IMR-90 (cell line): ENCODE measurements at regions of chr4 and their contacts with region 1.

Region 1: GRCh38 chr4:84966383-84967242 is at the start of gene WDFY3:
- DNase-seq: peak; percentile 89
- ATAC-seq: peak; percentile 95
- H3K4me3 ChIP-seq: peak within 1 kb of the TSS; percentile 73
- H3K27ac ChIP-seq: peak within 1 kb of the TSS; percentile 91
- H3K4me1 ChIP-seq: peaks cover 5% of the 10 kb centered on the region; the same call in 1 of the 2 replicates
- H3K27me3 ChIP-seq: no peaks in the 10 kb centered on the region
- CTCF ChIP-seq: 0 out of 2 replicates have a peak, but pooled peaks have one; percentile 10
- POLR2A ChIP-seq: peak; percentile 53; the same call in 1 of the 2 replicates
- RAD21 ChIP-seq: no peak
- total RNA-seq, gene WDFY3: 58.1 and 59.7 TPM in 2 replicates

Region 2: DNA sequence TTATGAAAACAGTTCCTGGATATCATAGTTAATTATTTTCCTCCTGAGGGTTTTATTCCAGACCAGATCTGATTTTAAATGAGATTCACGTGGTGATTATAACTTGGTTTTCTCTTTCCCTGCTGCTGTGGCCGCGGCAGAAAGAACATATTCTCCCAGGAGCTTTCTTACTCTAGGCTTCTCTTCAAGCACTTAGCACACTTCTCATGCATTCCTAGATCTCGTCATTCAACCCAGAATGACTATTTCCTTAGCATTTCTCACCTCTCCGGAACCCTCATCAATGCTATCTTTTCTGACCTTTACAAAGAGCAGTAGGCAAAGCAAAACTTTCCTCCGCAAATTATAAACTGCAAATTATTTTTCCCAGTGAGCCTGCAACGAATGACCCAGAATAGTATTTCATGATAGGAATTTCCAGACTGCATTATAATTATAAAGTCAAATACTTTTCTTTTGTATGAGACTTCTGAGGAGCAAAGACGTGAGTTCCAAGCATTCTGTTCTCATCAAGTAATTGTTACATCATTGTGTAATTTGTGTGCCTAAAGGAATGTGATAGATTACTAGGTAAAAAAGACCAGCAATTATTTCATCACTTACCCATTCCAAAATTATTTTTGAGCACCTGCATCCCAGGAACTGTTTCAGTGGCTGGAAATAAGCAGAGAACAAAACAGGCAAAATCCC is 1307.7 kb before region 1 on chr4:
- CTCF ChIA-PET with region 1: no interaction called
- POLR2A ChIA-PET with region 1: no interaction called
- dilution Hi-C with region 1: no loop called
- in situ Hi-C with region 1: no loop called
- intact Hi-C with region 1: no loop called
- DNase-seq: no peak
- ATAC-seq: no peak
- H3K4me3 ChIP-seq: no peak overlapping the region
- H3K27ac ChIP-seq: no peak overlapping the region
- H3K4me1 ChIP-seq: no peaks in the 10 kb centered on the region
- H3K27me3 ChIP-seq: peaks cover 4% of the 10 kb centered on the region
- CTCF ChIP-seq: no peak
- POLR2A ChIP-seq: no peak
- RAD21 ChIP-seq: no peak

Region 3: GRCh38 chr4:84582302-84583000 is 384.2 kb before region 1 on chr4:
- CTCF ChIA-PET with region 1: interaction called, 5 read pairs
- POLR2A ChIA-PET with region 1: no interaction called
- dilution Hi-C with region 1: no loop called
- in situ Hi-C with region 1: no loop called
- intact Hi-C with region 1: loop called (anchors 1 kb)
- DNase-seq: peak; percentile 22
- ATAC-seq: peak; percentile 80
- H3K4me3 ChIP-seq: peak overlapping the region; percentile 57
- H3K27ac ChIP-seq: no peak overlapping the region
- H3K4me1 ChIP-seq: no peaks in the 10 kb centered on the region
- H3K27me3 ChIP-seq: peaks cover 41% of the 10 kb centered on the region
- CTCF ChIP-seq: no peak
- POLR2A ChIP-seq: no peak
- RAD21 ChIP-seq: no peak

Region 4: GRCh38 chr4:84691170-84691691 is 275.4 kb before region 1 on chr4:
- CTCF ChIA-PET with region 1: no interaction called
- POLR2A ChIA-PET with region 1: no interaction called
- dilution Hi-C with region 1: no loop called
- in situ Hi-C with region 1: no loop called
- intact Hi-C with region 1: loop called (anchors 5 kb)
- DNase-seq: peak; percentile 94
- ATAC-seq: peak; percentile 88
- H3K4me3 ChIP-seq: no peak overlapping the region; the same call in 1 of the 2 replicates
- H3K27ac ChIP-seq: 0 out of 2 replicates have a peak overlapping the region, but pooled peaks have one; percentile 6
- H3K4me1 ChIP-seq: peaks cover 14% of the 10 kb centered on the region
- H3K27me3 ChIP-seq: no peaks in the 10 kb centered on the region
- CTCF ChIP-seq: no peak
- POLR2A ChIP-seq: no peak
- RAD21 ChIP-seq: no peak

Region 5: DNA sequence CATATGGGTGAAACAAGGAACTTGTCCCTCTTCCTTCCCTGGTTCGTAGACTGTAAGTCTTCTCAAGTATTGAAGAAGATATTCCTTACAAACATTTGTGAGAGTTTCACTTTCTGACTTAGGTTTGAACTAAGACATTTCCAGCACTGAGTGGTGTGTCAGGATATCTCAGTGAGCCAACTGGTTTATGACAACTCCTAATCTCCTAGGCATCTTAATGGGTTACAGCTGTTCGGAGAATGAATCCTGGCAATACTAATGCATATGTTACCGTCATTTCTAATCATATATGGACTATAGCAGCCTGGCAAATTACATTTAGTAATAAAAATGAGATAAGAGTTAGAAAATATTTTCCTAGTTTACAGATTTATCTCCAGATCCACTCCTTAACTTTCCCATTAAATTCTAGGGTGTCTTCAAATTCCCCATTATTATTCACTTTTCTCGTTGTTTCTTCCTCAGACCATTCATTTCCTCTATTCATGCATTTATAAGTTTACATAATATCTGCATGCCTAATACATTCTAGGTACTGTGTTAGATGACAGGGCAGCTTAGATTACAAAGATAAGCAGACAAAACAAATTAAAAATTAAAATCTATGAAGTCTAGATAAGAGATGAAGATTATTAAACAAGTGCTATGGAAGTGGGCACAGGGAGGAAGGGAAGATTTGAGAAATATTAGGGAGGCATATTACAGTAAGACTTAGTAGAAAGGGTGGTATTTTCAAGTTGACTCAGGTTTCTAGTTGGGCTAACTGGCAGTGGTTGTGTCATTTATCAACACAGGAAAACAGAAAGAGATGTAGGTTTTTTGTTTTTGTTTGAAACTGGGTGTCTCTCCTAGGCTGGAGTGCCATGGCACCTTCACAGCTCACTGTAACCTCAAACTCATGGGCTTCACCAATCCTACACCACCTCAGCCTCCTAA is 174.0 kb before region 1 on chr4:
- CTCF ChIA-PET with region 1: interaction called, 3 read pairs
- POLR2A ChIA-PET with region 1: no interaction called
- dilution Hi-C with region 1: no loop called
- in situ Hi-C with region 1: no loop called
- intact Hi-C with region 1: loop called (anchors 5 kb)
- DNase-seq: peak; percentile 45
- ATAC-seq: peak; percentile 64
- H3K4me3 ChIP-seq: no peak overlapping the region
- H3K27ac ChIP-seq: no peak overlapping the region
- H3K4me1 ChIP-seq: no peaks in the 10 kb centered on the region
- H3K27me3 ChIP-seq: no peaks in the 10 kb centered on the region
- CTCF ChIP-seq: no peak
- POLR2A ChIP-seq: no peak
- RAD21 ChIP-seq: no peak

Region 6: DNA sequence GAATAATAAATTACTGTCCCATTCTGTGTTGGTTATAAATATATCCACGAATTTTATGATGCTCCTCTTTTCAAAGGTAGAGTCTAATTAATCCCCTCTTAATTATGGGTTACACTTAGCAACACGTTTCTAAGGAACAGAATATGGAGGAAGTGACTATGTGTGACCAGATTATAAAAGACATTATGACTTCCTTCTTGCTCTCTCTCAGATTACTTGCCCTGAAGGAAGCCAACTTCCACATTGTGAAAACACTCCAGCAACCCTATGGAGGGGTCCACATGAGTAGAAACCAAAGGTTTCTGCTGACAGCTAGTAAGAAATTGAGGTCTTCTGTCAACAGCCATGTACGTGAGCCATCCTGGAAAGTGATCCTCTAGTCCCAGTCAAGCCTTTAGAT is 59.5 kb before region 1 on chr4:
- CTCF ChIA-PET with region 1: no interaction called
- POLR2A ChIA-PET with region 1: no interaction called
- dilution Hi-C with region 1: no loop called
- in situ Hi-C with region 1: no loop called
- intact Hi-C with region 1: no loop called
- DNase-seq: no peak
- ATAC-seq: no peak
- H3K4me3 ChIP-seq: no peak overlapping the region
- H3K27ac ChIP-seq: no peak overlapping the region
- H3K4me1 ChIP-seq: 0 out of 2 replicates have a peak, but pooled peaks cover 2% of the 10 kb centered on the region
- H3K27me3 ChIP-seq: no peaks in the 10 kb centered on the region
- CTCF ChIP-seq: no peak
- POLR2A ChIP-seq: no peak
- RAD21 ChIP-seq: no peak